Right ventricle myocardium inferior (tissue), 1 donor: ENCODE measurements at regions of chr11 and their contacts with region 1.

Region 1: GRCh38 chr11:127733552-127733951 is 733.0 kb upstream of the KIRREL3 start:
- DNase-seq: no peak
- ATAC-seq: peak; percentile 44

Region 2: GRCh38 chr11:127454856-127455255 is 278.7 kb before region 1 on chr11:
- intact Hi-C with region 1: no loop called
- DNase-seq: no peak
- ATAC-seq: no peak

Region 3: GRCh38 chr11:127675581-127675980 is 58.0 kb before region 1 on chr11:
- intact Hi-C with region 1: no loop called
- DNase-seq: no peak
- ATAC-seq: no peak

Region 4: GRCh38 chr11:127804747-127805400 is 71.3 kb after region 1 on chr11:
- intact Hi-C with region 1: no loop called
- DNase-seq: no peak
- ATAC-seq: no peak

Region 5: DNA sequence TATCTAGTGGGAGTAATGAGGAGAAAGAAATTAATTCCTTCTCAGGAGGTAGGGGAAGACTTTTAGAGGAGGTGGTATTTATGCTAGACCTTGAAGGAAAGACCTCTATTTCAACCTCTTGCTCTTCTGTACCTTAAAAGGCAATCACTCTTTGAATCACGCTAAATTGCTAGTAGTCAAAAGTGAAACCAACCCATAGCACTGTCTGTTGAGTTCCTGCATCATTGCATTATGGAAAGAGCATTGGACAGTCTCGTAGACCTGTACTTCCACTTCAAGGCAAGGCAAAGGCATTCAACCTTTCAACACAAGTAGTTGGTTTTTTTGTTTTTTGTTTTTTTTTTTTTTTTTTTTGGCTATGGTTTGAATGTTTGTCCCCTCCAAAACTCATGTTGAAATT is 83.4 kb after region 1 on chr11:
- intact Hi-C with region 1: no loop called
- DNase-seq: no peak
- ATAC-seq: no peak

Region 6: DNA sequence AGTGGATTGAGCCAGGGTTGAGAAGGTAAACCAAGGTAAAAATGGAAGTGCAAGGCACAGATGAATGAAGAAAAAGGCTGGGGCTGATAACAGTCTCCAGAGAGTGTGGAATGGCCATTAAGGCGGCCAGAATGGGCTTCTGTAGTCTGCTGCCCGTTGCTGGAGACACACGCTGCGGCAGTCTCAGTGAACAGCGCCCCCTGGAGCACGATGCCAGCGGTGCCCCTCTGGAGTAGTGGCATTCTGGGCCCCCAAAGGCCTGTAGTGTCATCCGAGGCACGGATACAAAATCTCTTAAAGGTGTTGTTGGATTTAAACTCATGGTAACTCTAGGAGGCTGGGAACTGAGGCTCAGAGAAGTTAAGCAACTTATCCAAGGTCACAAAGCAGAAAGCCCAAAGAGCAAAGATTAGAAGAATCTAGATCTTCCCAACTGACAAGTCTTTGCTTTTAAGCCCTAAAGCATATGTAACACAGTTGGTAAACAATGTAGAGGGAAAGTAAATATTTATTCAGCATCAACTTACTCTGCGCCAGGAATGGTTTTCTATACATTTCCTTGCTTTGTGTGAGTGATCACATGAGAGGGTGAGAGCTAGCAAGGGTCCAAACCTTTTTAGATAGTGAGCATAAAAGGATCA is 1115.4 kb after region 1 on chr11:
- intact Hi-C with region 1: loop called (anchors 10 kb)
- DNase-seq: no peak
- ATAC-seq: no peak